Caco-2 (cell line): ENCODE measurements at regions of chr4 and their contacts with region 1.

Region 1: GRCh38 chr4:139099366-139099982 is 77.5 kb downstream of the ELF2 start:
- DNase-seq: peak; percentile 75 to 77
- H3K4me3 ChIP-seq: no peak overlapping the region
- H3K4me3 Mint-ChIP-seq: no peak overlapping the region
- H3K27ac Mint-ChIP-seq: peak overlapping the region; percentile 48
- H3K4me1 ChIP-seq: peaks cover 15% of the 10 kb centered on the region
- H3K4me1 Mint-ChIP-seq: peaks cover 28% of the 10 kb centered on the region
- H3K27me3 ChIP-seq: no peaks in the 10 kb centered on the region
- H3K27me3 Mint-ChIP-seq: no peaks in the 10 kb centered on the region
- CTCF ChIP-seq: peak; percentile 78 to 80

Region 2: GRCh38 chr4:139118365-139118764 is 18.9 kb after region 1 on chr4:
- CTCF ChIA-PET with region 1: interaction called, 3 read pairs
- POLR2A ChIA-PET with region 1: no interaction called
- intact Hi-C with region 1: loop called (anchors 2 kb)
- DNase-seq: no peak
- H3K4me3 ChIP-seq: no peak overlapping the region
- H3K4me3 Mint-ChIP-seq: no peak overlapping the region
- H3K27ac Mint-ChIP-seq: no peak overlapping the region
- H3K4me1 ChIP-seq: 0 out of 2 replicates have a peak, but pooled peaks cover 6% of the 10 kb centered on the region
- H3K4me1 Mint-ChIP-seq: peaks cover 15% of the 10 kb centered on the region
- H3K27me3 ChIP-seq: no peaks in the 10 kb centered on the region
- H3K27me3 Mint-ChIP-seq: no peaks in the 10 kb centered on the region
- CTCF ChIP-seq: no peak

Region 3: DNA sequence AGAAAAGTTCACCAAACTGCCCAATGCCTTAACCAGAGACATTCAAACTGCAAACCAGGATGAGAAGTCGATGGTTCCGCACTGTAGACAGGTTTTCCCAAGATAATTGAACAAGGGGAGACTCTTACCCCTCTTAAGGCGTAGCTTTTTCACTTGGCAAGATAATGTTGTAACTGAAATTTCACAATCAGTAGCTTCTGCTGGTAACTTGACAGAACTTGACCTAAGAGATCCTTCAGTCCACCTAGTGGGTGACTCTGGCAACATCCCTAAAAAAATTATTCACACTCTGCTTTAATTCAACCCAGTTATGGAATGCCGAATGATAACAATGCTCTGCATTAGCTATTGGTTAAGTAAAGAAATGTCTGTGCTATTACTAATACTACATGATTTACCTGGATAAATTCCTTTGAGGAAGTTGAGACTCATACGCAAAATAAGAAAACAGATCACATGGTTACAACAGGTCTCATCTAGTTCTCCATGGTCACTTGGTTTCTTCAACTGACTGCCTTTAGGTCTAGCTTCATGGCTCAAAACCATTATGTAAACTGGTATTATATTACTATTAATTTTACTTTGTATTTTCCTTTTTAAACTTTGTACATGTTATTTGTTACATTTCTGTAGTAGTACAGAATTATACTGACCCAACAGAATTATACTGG is 68.4 kb after region 1 on chr4:
- CTCF ChIA-PET with region 1: interaction called, 21 read pairs
- POLR2A ChIA-PET with region 1: no interaction called
- intact Hi-C with region 1: loop called (anchors 1 kb)
- DNase-seq: peak in 1 of 2 experiments; percentile 59
- H3K4me3 ChIP-seq: no peak overlapping the region
- H3K4me3 Mint-ChIP-seq: no peak overlapping the region
- H3K27ac Mint-ChIP-seq: no peak overlapping the region
- H3K4me1 ChIP-seq: peaks cover 22% of the 10 kb centered on the region
- H3K4me1 Mint-ChIP-seq: peaks cover 12% of the 10 kb centered on the region
- H3K27me3 ChIP-seq: no peaks in the 10 kb centered on the region
- H3K27me3 Mint-ChIP-seq: no peaks in the 10 kb centered on the region
- CTCF ChIP-seq: peak; percentile 55 to 59

Region 4: GRCh38 chr4:139177868-139178611 is 78.6 kb after region 1 on chr4:
- CTCF ChIA-PET with region 1: interaction called, 4 read pairs
- POLR2A ChIA-PET with region 1: interaction called, 3 read pairs
- intact Hi-C with region 1: loop called (anchors 2 kb)
- DNase-seq: peak; percentile 96 to 97
- H3K4me3 ChIP-seq: peak overlapping the region; percentile 84
- H3K4me3 Mint-ChIP-seq: peak overlapping the region; percentile 87
- H3K27ac Mint-ChIP-seq: peak overlapping the region; percentile 92
- H3K4me1 ChIP-seq: peaks cover 13% of the 10 kb centered on the region; the same call in 1 of the 2 replicates
- H3K4me1 Mint-ChIP-seq: peaks cover 6% of the 10 kb centered on the region
- H3K27me3 ChIP-seq: no peaks in the 10 kb centered on the region
- H3K27me3 Mint-ChIP-seq: no peaks in the 10 kb centered on the region
- CTCF ChIP-seq: no peak

Region 5: GRCh38 chr4:139229534-139230039 is 130.1 kb after region 1 on chr4:
- CTCF ChIA-PET with region 1: no interaction called
- POLR2A ChIA-PET with region 1: no interaction called
- intact Hi-C with region 1: loop called (anchors 1 kb)
- DNase-seq: peak in 1 of 2 experiments; percentile 46
- H3K4me3 ChIP-seq: no peak overlapping the region
- H3K4me3 Mint-ChIP-seq: no peak overlapping the region
- H3K27ac Mint-ChIP-seq: no peak overlapping the region
- H3K4me1 ChIP-seq: no peaks in the 10 kb centered on the region
- H3K4me1 Mint-ChIP-seq: no peaks in the 10 kb centered on the region
- H3K27me3 ChIP-seq: no peaks in the 10 kb centered on the region
- H3K27me3 Mint-ChIP-seq: no peaks in the 10 kb centered on the region
- CTCF ChIP-seq: peak; percentile 38 to 70

Region 6: DNA sequence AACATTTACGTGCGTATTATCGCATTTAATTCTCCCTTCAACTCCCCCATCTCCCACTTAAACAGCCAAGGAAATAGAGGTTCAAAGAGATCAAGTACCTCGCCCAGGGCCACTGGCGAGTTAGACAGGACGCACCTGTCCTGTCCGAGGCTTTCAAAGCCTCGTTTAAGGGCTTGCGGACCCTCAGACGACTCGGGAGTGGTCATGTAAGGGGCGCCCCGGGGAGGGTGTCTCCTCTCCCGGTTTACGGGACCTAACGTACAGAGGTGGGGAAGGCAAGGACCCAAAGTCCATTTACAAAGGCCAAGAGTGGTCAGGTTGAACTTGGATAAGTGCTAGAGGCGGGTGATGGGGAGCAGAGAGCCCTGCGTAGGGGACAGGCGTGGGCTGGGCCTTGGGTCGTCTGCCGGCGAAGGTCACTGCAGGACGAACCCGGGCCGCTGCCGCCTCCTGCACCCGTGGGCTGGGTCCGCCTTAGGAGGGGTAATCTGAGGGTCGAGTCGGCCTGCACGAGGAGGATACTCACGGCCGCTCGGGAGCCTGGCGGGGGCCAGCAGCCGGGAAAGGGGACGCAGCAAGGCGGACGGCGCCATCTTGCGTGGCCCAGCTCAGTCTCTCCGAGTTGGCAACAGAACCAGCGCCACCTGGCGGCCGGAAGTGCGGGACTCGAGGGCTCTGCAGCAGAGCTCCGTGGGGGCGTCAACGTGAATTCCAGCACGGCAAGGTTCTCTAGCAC is 195.9 kb after region 1 on chr4:
- CTCF ChIA-PET with region 1: interaction called, 6 read pairs
- POLR2A ChIA-PET with region 1: no interaction called
- intact Hi-C with region 1: loop called (anchors 1 kb)
- DNase-seq: peak; percentile 93 to 96
- H3K4me3 ChIP-seq: peak overlapping the region; percentile 88
- H3K4me3 Mint-ChIP-seq: peak overlapping the region; percentile 86
- H3K27ac Mint-ChIP-seq: peak overlapping the region; percentile 92
- H3K4me1 ChIP-seq: peaks cover 9% of the 10 kb centered on the region; the same call in 1 of the 2 replicates
- H3K4me1 Mint-ChIP-seq: no peaks in the 10 kb centered on the region
- H3K27me3 ChIP-seq: no peaks in the 10 kb centered on the region
- H3K27me3 Mint-ChIP-seq: no peaks in the 10 kb centered on the region
- CTCF ChIP-seq: peak; percentile 87 to 95

Region 7: GRCh38 chr4:139825523-139826014 is 726.1 kb after region 1 on chr4:
- CTCF ChIA-PET with region 1: no interaction called
- POLR2A ChIA-PET with region 1: no interaction called
- intact Hi-C with region 1: no loop called
- DNase-seq: no peak
- H3K4me3 ChIP-seq: no peak overlapping the region
- H3K4me3 Mint-ChIP-seq: no peak overlapping the region
- H3K27ac Mint-ChIP-seq: no peak overlapping the region
- H3K4me1 ChIP-seq: no peaks in the 10 kb centered on the region
- H3K4me1 Mint-ChIP-seq: peaks cover 7% of the 10 kb centered on the region
- H3K27me3 ChIP-seq: no peaks in the 10 kb centered on the region
- H3K27me3 Mint-ChIP-seq: no peaks in the 10 kb centered on the region
- CTCF ChIP-seq: no peak